GM10248 (cell line): ENCODE measurements at regions of chr18 and their contacts with region 1.

Region 1: GRCh38 chr18:63131106-63131958 is 188.2 kb downstream of the BCL2 start:
- DNase-seq: no peak
- CTCF ChIP-seq: peak; percentile 47

Region 2: DNA sequence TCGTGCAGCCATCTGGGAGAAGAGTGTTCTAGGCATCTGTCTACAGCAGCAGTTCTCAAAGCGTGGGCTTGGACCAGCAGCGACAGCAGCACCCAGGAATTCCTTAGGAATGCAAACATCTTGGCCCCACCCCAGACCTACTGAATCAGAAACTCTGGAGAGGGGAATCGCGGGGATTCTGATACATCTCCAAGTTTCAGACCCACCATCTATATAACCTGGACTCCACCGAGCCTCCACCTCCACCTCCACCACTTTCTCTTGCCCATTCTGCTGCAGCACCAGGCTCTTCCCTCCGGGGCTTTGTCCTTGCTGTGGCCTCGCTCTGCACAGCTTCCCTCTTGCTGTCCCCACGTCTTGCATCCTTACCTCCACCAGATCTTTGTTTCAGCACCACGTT is 68.2 kb before region 1 on chr18:
- CTCF ChIA-PET with region 1: no interaction called
- POLR2A ChIA-PET with region 1: no interaction called
- DNase-seq: no peak
- CTCF ChIP-seq: no peak

Region 3: GRCh38 chr18:63098018-63098981 is 33.0 kb before region 1 on chr18:
- CTCF ChIA-PET with region 1: interaction called, 13 read pairs
- POLR2A ChIA-PET with region 1: no interaction called
- DNase-seq: peak; percentile 65
- CTCF ChIP-seq: no peak

Region 4: DNA sequence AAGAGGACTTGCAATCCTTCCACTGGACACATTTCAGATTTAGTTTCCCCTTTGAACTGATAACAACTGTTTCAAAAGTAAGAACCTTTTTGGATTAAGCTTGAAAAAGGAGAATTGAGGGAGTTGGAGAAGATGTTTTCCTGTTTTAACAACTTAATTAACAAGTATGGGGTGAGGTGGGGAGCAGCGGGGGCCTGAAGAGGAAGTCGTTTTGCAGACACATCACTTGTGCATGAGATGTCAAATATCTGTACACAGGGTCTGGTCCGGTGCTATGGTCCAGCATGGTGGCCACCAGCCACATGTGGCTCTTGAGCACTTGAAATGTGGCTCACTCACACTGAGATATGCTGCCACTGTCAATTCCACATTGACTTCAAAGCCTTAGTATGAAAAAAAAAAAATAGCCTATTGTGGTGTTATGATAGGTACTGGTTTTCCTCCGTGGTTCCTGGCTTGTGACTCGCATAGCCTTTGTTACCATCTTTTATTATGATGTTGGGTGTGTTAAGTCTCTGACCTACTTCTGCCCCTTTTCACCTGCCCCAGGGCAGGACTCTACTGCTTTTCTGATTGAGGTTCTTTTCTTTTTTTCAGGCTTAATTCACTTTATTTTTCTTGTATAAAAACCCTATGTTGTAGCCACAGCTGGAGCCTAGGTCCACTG is 17.3 kb before region 1 on chr18:
- CTCF ChIA-PET with region 1: interaction called, 23 read pairs
- POLR2A ChIA-PET with region 1: interaction called, 3 read pairs
- DNase-seq: no peak
- CTCF ChIP-seq: no peak

Region 5: GRCh38 chr18:63155169-63155852 is 24.0 kb after region 1 on chr18:
- CTCF ChIA-PET with region 1: interaction called, 172 read pairs
- POLR2A ChIA-PET with region 1: interaction called, 4 read pairs
- DNase-seq: peak; percentile 62
- CTCF ChIP-seq: peak; percentile 90

Region 6: DNA sequence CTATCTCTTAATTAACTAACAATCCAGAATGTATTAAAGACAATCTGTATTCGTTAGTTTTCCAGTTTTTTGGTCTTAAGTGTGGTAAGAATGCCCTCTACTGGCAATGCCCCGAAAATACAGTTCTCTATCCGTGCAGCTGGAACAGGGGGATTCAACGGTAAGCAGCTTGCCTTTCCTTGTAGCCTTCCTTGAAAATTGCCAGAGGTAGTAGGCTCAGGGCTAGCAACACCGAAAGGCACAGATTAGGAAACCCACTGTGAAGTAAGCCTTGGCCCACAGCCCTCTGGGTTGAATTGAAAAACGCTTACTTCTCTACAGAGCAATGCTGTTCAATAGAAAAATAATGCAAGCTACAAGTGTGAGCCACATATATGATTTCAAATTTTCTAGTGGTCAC is 308.0 kb after region 1 on chr18:
- CTCF ChIA-PET with region 1: interaction called, 15 read pairs
- POLR2A ChIA-PET with region 1: no interaction called
- DNase-seq: peak; percentile 63
- CTCF ChIP-seq: peak; percentile 85